ENCODE measurements at regions of chr17 and their contacts with region 1.

Region 1: DNA sequence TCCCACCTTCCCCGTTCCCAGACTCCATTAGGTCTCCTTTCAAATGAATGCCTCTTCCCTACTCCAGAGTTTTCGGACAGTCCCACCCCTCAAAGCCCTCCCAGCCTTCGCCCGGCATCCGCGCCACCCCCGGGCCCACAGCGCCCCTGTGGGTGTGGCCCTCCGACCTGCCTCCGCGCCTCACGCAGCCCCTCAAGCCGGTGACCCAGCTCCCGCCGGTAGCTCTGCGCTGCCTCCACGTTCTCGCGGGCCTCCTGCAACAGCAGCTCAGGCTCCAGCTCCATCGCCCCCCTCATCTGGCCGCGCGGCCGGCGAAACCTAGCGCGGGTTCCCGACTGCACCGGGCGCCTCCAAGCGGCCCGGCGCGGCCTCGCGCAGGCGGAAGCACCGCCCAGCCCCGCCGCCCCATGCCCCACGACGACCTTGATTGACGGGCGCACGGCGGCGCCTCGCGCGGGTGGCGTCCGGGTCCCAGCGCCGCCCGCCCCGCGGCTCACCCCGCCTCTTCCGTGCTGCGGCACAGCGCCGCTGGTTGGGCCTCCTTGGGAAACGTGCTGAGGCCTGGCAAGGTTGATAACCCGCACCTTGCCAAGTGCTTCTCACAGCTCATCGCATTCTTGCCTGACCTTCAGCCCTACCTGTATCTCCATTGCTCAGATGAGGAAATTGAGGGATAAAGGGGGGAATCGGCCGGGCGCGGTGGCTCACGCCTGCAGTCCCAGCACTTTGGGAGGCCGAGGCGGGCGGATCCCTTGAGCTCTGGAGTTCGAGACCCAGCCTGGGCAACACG is at the start of gene CRLF3:
- DNase-seq: peak; percentile 82 to 93 (median 91)
- H3K4me3 ChIP-seq: peak within 1 kb of the TSS; percentile 96
- H3K4me3 Mint-ChIP-seq: peak within 1 kb of the TSS; percentile 90 to 99 (median 95)
- H3K27ac ChIP-seq: peak within 1 kb of the TSS; percentile 78
- H3K27ac Mint-ChIP-seq: peak within 1 kb of the TSS; percentile 82 to 99 (median 92)
- H3K4me1 ChIP-seq: peaks cover 35% of the 10 kb centered on the region
- H3K4me1 Mint-ChIP-seq: peaks cover 35 to 43% (median 41%) of the 10 kb centered on the region in 3 donors
- H3K27me3 ChIP-seq: no peaks in the 10 kb centered on the region
- H3K27me3 Mint-ChIP-seq: no peaks in the 10 kb centered on the region
- total RNA-seq, gene CRLF3: 42.7 to 43.0 TPM

Region 2: DNA sequence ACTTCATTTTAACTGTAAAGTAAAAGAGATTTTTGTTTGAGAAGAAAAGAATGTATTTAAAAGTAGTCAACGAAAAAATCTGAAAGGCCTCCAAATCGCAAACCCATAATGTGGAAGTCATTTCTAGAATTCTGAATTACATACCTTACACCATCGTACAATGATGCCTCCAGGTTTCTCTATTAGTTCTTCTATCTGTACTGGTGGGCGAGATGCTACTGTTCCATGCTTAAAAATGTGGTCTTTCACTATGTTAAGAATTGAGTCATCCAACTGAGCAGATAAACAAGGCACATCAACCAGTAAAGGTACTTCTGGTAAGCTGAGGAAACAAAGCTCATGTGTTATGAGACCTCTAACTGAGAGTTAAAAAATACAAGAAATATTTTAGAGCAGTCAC is 28.5 kb before region 1 on chr17:
- CTCF ChIA-PET with region 1: interaction called, 12 read pairs
- POLR2A ChIA-PET with region 1: interaction called, 3 read pairs
- DNase-seq: no peak
- H3K4me3 ChIP-seq: no peak overlapping the region
- H3K4me3 Mint-ChIP-seq: no peak overlapping the region
- H3K27ac ChIP-seq: no peak overlapping the region
- H3K27ac Mint-ChIP-seq: peak overlapping the region in 5 of 8 donors; percentile 9 to 70 (median 49)
- H3K4me1 ChIP-seq: no peaks in the 10 kb centered on the region
- H3K4me1 Mint-ChIP-seq: peaks cover 3 to 18% (median 10%) of the 10 kb centered on the region in 3 donors
- H3K27me3 ChIP-seq: no peaks in the 10 kb centered on the region
- H3K27me3 Mint-ChIP-seq: no peaks in the 10 kb centered on the region

Region 3: DNA sequence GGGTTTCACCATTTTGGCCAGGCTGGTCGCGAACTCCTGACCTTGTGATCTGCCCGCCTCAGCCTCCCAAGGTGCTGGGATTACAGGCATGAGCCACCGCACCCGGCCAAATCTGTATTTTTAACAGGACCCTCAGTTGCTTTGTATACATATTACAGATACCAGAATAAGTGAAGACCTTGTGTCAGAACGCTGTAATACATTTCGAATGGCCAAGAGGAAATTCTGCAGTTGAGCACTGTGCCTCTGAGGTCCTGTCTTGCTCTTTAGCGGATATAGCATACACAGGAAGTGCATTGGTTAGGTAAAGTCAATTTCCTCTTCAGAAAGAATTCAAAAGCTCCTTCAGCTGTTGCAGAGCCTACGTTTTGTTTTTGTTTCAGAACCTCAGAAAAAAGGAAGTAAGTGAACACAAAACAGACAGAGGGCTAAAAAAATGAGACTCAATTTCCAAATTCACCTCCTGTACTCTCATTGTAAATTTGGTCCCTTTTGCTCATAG is 15.7 kb before region 1 on chr17:
- CTCF ChIA-PET with region 1: interaction called, 90 read pairs
- POLR2A ChIA-PET with region 1: interaction called, 51 read pairs
- DNase-seq: peak in 3 of 5 donors; percentile 64 to 83 (median 71)
- H3K4me3 ChIP-seq: peak overlapping the region; percentile 57
- H3K4me3 Mint-ChIP-seq: peak overlapping the region; percentile 77 to 91 (median 86)
- H3K27ac ChIP-seq: peak overlapping the region; percentile 21
- H3K27ac Mint-ChIP-seq: peak overlapping the region; percentile 89 to 97 (median 94)
- H3K4me1 ChIP-seq: peaks cover 66% of the 10 kb centered on the region
- H3K4me1 Mint-ChIP-seq: peaks cover 63 to 78% (median 77%) of the 10 kb centered on the region in 3 donors
- H3K27me3 ChIP-seq: no peaks in the 10 kb centered on the region
- H3K27me3 Mint-ChIP-seq: no peaks in the 10 kb centered on the region